Breast epithelium (tissue), 4 donors: ENCODE measurements at regions of chr1 and their contacts with region 1.

Region 1: DNA sequence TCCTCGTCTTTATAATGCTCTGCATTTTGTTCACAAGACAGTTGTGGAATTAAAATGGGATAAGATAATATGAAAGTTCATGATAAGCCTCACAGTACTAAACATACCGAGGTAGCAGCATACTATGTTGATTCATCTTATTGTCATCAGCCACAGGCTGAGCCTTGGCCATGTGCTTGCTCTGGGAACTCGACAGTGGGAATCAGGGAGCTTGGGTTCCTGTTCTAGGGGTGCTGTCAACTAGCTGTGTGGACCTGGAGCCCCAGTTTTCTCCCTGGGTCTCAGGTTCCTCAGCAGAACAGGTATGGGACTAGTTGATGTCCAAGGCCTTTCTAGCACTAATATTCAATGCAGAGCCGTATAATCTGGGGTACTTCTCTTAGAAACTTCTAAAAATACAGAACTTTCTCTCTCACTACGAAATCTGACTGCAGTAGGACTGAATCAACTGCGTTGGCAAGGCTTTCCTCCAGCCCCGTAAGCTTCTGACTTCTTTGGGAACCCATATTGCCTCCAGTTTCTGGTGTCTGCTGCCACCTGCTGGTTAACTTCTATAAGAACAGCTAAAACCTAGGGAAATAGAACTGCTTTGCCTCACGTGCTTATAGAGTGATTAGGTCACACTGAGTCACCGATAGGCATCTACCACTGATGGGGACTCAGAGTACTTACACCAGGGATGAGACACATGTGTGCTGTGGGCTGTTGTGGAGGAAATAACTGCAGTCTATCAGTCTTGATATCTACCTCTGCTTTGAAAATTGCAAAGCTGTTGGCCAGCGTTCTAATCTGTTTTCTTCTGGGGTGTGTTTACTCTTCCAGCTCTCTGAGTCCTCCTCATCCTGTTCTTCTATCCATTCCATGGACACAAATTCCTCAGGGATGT is 110.9 kb downstream of the RGL1 start:
- DNase-seq: peak in 1 of 2 donors; percentile 50
- H3K4me3 ChIP-seq: no peak overlapping the region
- H3K27ac ChIP-seq: peak overlapping the region; percentile 46 to 67
- H3K4me1 ChIP-seq: no peaks in the 10 kb centered on the region
- H3K27me3 ChIP-seq: no peaks in the 10 kb centered on the region
- CTCF ChIP-seq: peak; percentile 79 to 93 (median 90)
- POLR2A ChIP-seq: no peak

Region 2: GRCh38 chr1:183619781-183620180 is 296.1 kb before region 1 on chr1:
- intact Hi-C with region 1: no loop called
- DNase-seq: no peak
- H3K4me3 ChIP-seq: no peak overlapping the region
- H3K27ac ChIP-seq: no peak overlapping the region
- H3K4me1 ChIP-seq: no peaks in the 10 kb centered on the region
- H3K27me3 ChIP-seq: no peaks in the 10 kb centered on the region
- CTCF ChIP-seq: no peak
- POLR2A ChIP-seq: no peak

Region 3: DNA sequence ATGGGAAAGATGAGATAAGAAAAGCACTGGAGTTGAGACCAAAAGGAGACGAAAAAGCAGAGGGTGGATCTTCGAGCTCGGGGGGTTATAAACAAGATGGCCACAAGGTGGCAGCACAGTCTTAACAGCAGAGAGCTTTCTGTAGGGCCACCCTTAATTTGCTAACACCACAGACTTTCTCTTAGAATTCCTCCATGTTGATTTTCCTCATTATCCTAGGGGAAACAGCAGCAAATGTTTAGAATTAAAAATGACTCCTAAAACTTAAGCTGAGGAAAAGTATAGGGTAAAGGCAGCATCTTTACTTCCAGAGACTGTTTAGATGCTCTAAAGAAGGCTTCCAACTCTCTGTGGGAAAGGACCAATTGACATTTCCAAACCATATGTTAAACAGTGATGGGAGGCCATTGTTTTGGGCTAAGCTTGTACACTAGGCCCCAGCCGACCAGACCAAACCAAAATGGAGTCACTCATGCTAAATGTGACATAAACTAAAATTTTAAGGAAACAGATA is 260.2 kb before region 1 on chr1:
- intact Hi-C with region 1: loop called (anchors 10 kb)
- DNase-seq: peak; percentile 64 to 72
- H3K4me3 ChIP-seq: no peak overlapping the region
- H3K27ac ChIP-seq: no peak overlapping the region
- H3K4me1 ChIP-seq: no peaks in the 10 kb centered on the region
- H3K27me3 ChIP-seq: no peaks in the 10 kb centered on the region
- CTCF ChIP-seq: peak; percentile 51 to 88 (median 87)
- POLR2A ChIP-seq: no peak

Region 4: DNA sequence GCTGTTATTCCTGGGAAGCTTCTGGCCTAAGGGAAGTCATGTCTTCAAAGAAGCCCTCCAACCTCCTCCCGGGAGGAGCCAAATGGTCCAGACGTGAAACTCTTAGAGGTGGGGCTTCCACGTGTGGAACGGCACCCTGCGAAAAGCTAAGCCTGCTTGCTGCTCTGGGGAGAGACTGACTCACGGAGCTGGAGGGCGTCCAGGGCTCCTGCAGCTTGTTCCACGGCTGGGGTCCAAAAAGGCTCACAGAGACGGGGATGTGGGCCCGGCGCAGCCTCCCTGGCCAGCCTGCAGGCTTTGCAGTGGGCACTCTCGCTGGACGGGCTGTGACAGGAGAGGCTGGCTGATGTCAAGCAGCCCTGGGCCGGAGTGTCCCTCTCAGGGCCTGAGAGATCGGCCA is 16.5 kb after region 1 on chr1:
- intact Hi-C with region 1: no loop called
- DNase-seq: no peak
- H3K4me3 ChIP-seq: peak overlapping the region in 2 of 3 donors; percentile 11 to 30
- H3K27ac ChIP-seq: peak overlapping the region in 1 of 2 donors; percentile 29
- H3K4me1 ChIP-seq: peaks cover 0 to 5% of the 10 kb centered on the region in 2 donors
- H3K27me3 ChIP-seq: no peaks in the 10 kb centered on the region
- CTCF ChIP-seq: no peak
- POLR2A ChIP-seq: no peak

Region 5: DNA sequence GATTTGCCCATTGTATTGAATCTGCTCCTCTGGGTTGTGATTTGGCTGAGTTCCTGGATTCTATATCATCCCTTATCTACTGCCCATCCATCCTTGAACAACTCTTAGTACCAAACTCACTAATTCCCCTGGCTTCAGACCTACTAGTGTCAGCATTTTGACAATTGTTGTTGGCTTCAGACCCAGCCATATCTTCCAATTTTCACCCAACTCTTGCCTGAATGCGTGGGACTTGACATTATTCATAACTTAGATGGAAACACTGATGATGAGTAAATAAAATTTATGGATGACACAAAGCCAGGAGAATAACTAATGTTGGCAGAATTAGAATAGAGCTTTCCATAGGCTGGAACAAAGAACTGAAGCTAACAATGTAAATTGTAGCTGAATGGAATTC is 866.1 kb after region 1 on chr1:
- intact Hi-C with region 1: no loop called
- DNase-seq: no peak
- H3K4me3 ChIP-seq: no peak overlapping the region
- H3K27ac ChIP-seq: no peak overlapping the region
- H3K4me1 ChIP-seq: no peaks in the 10 kb centered on the region
- H3K27me3 ChIP-seq: no peaks in the 10 kb centered on the region
- CTCF ChIP-seq: no peak
- POLR2A ChIP-seq: no peak